ENCODE measurements at regions of chr17 and their contacts with region 1.

Region 1: GRCh38 chr17:27466743-27467375 is 10.6 kb downstream of the KSR1 start:
- DNase-seq: peak; percentile 77
- H3K4me3 Mint-ChIP-seq: peak overlapping the region; percentile 55
- H3K27ac Mint-ChIP-seq: peak overlapping the region; percentile 86
- H3K4me1 Mint-ChIP-seq: peaks cover 81% of the 10 kb centered on the region
- H3K27me3 Mint-ChIP-seq: no peaks in the 10 kb centered on the region

Region 2: GRCh38 chr17:27367121-27367991 is 99.5 kb before region 1 on chr17:
- intact Hi-C with region 1: no loop called
- DNase-seq: no peak
- H3K4me3 Mint-ChIP-seq: no peak overlapping the region
- H3K27ac Mint-ChIP-seq: no peak overlapping the region
- H3K4me1 Mint-ChIP-seq: no peaks in the 10 kb centered on the region
- H3K27me3 Mint-ChIP-seq: peaks cover 2% of the 10 kb centered on the region

Region 3: GRCh38 chr17:27455914-27456680 is 10.8 kb before region 1 on chr17 and contains the start of gene KSR1:
- intact Hi-C with region 1: loop called (anchors 1 kb)
- DNase-seq: peak; percentile 77
- H3K4me3 Mint-ChIP-seq: peak within 1 kb of the TSS; percentile 95
- H3K27ac Mint-ChIP-seq: peak within 1 kb of the TSS; percentile 57
- H3K4me1 Mint-ChIP-seq: peaks cover 35% of the 10 kb centered on the region
- H3K27me3 Mint-ChIP-seq: peaks cover 11% of the 10 kb centered on the region
- total RNA-seq, gene KSR1: 96.5 and 101 TPM in 2 replicates

Region 4: GRCh38 chr17:27481327-27481726 is 14.5 kb after region 1 on chr17:
- intact Hi-C with region 1: loop called (anchors 2 kb)
- DNase-seq: peak; percentile 53
- H3K4me3 Mint-ChIP-seq: peak overlapping the region; percentile 26
- H3K27ac Mint-ChIP-seq: peak overlapping the region; percentile 89
- H3K4me1 Mint-ChIP-seq: peaks cover 56% of the 10 kb centered on the region
- H3K27me3 Mint-ChIP-seq: no peaks in the 10 kb centered on the region

Region 5: GRCh38 chr17:27494192-27495091 is 27.6 kb after region 1 on chr17:
- intact Hi-C with region 1: no loop called
- DNase-seq: no peak
- H3K4me3 Mint-ChIP-seq: no peak overlapping the region
- H3K27ac Mint-ChIP-seq: no peak overlapping the region
- H3K4me1 Mint-ChIP-seq: peaks cover 22% of the 10 kb centered on the region
- H3K27me3 Mint-ChIP-seq: no peaks in the 10 kb centered on the region

Region 6: DNA sequence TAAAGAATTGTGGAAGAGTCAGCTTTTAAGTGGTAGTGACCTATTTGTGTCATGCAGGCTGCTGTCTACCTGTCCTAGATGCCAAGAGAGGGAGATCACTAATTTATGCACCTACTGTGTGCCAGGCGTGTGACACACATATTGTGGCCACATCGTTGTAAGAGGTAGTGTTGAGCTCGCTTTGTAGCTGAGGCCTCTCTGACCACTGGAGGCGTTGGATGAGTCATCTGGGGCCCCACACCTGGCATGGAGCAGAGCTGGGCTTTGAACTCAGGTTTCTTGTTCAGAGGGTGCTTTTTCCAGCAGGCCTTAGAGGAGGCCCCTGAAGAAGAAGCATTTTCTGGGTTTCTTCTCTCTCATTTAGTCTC is 111.8 kb after region 1 on chr17:
- intact Hi-C with region 1: loop called (anchors 2 kb)
- DNase-seq: peak; percentile 41
- H3K4me3 Mint-ChIP-seq: no peak overlapping the region
- H3K27ac Mint-ChIP-seq: peak overlapping the region; percentile 90
- H3K4me1 Mint-ChIP-seq: peaks cover 68% of the 10 kb centered on the region
- H3K27me3 Mint-ChIP-seq: no peaks in the 10 kb centered on the region

Region 7: DNA sequence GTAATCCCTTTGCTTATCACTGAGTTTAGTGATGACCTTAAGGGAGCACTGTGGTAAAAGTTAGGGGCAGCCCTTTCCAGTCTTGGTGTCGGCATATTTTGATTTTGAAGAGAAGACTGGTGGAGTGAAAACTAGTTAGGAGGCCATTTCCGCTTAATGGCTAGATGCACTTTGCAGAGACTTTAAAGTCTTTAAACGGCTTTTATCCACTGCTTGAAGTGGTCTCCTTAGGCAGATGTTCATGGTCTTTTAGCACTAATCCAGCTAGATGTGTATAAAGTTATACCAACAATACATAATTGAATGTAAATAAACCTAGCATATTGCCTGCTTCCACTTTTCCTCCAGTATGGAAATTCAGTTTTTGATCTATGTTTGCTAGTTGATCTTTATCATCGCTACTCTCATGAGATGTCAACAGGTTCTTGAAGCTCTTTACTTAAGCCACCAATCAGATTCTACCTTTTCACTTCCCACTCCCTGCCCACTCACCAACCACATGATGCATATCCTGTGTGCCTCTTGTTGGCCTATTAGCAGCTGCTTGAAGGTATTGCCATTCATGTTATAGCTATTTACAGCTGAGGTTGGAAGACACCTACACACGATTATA is 707.6 kb after region 1 on chr17:
- intact Hi-C with region 1: no loop called
- DNase-seq: peak; percentile 22
- H3K4me3 Mint-ChIP-seq: no peak overlapping the region
- H3K27ac Mint-ChIP-seq: peak overlapping the region; percentile 72
- H3K4me1 Mint-ChIP-seq: peaks cover 29% of the 10 kb centered on the region
- H3K27me3 Mint-ChIP-seq: no peaks in the 10 kb centered on the region

Measured in activated T-helper 2 cell treated with anti-CD3 and anti-CD28 coated beads, Interferon-gamma antibody, Interleukin-2, Interleukin-4, amounts not matched to agents 10 μg/mL and 5 μg/mL and 100 μg/mL, durations not matched to agents 14 hours and 24 hours and 36 hours (primary cell).